Activated T-helper 1 cell treated with anti-CD3 and anti-CD28 coated beads, Interleukin-12 subunit alpha, Interleukin-12 subunit beta, Interleukin-2, Interleukin-4 antibody, amounts not matched to agents 30 ng/mL and 10 ng/mL and 1 ng/mL, durations not matched to agents 14 hours and 24 hours and 36 hours (primary cell): ENCODE measurements at regions of chr9 and their contacts with region 1.

Region 1: DNA sequence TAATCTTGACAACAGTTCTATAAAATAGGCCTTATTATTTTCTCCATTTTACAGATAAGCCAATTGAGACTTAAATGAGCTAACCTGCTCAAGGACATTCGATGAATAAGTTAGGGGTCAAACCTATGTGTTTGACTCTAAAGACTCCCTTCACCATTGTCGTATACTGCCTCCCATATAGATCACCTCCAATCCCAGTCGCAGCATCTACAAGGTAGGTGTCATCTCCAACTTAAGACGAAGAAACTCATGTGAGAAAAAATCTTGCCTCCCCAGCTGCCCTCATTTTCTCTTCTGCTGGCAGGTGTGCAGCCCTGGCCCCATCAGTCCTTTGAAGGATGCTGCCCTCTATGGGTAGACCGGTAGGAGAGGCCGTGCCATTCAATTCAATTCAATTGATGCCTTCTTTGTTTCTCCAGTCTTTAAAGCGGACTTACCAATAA is 75.2 kb upstream of the SMARCA2 start:
- DNase-seq: peak; percentile 5
- H3K4me3 Mint-ChIP-seq: no peak overlapping the region
- H3K27ac Mint-ChIP-seq: no peak overlapping the region
- H3K4me1 Mint-ChIP-seq: no peaks in the 10 kb centered on the region
- H3K27me3 Mint-ChIP-seq: peaks cover 5% of the 10 kb centered on the region

Region 2: GRCh38 chr9:1591310-1591709 is 348.6 kb before region 1 on chr9:
- intact Hi-C with region 1: no loop called
- DNase-seq: no peak
- H3K4me3 Mint-ChIP-seq: no peak overlapping the region
- H3K27ac Mint-ChIP-seq: no peak overlapping the region
- H3K4me1 Mint-ChIP-seq: no peaks in the 10 kb centered on the region
- H3K27me3 Mint-ChIP-seq: peaks cover 2% of the 10 kb centered on the region

Region 3: GRCh38 chr9:1709345-1709744 is 230.6 kb before region 1 on chr9:
- intact Hi-C with region 1: loop called (anchors 5 kb)
- DNase-seq: no peak
- H3K4me3 Mint-ChIP-seq: no peak overlapping the region
- H3K27ac Mint-ChIP-seq: no peak overlapping the region
- H3K4me1 Mint-ChIP-seq: no peaks in the 10 kb centered on the region
- H3K27me3 Mint-ChIP-seq: peaks cover 5% of the 10 kb centered on the region

Region 4: DNA sequence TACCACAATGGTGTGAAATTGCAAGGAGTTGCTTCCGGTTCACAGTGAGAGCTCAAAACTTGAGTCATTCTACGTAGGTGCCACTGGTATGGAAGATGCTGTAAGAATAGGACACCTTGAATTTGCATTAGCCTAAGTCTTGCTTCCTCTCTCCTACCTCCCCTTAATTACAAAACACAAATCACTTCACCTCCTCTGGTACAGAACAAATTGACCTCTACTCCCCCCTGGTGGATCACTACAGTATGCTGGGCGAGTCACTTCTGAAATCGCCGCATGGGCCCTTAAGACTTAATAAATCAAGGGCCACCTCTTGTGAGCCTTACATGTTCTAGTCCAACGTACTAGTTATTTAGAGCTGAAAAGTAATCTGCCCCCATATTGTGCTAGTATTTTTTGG is 70.1 kb before region 1 on chr9:
- intact Hi-C with region 1: loop called (anchors 2 kb)
- DNase-seq: no peak
- H3K4me3 Mint-ChIP-seq: no peak overlapping the region
- H3K27ac Mint-ChIP-seq: no peak overlapping the region
- H3K4me1 Mint-ChIP-seq: no peaks in the 10 kb centered on the region
- H3K27me3 Mint-ChIP-seq: peaks cover 48% of the 10 kb centered on the region

Region 5: GRCh38 chr9:2043881-2044462 is 104.0 kb after region 1 on chr9:
- intact Hi-C with region 1: no loop called
- DNase-seq: no peak
- H3K4me3 Mint-ChIP-seq: no peak overlapping the region
- H3K27ac Mint-ChIP-seq: peak overlapping the region; percentile 15
- H3K4me1 Mint-ChIP-seq: peaks cover 39% of the 10 kb centered on the region
- H3K27me3 Mint-ChIP-seq: no peaks in the 10 kb centered on the region

Region 6: DNA sequence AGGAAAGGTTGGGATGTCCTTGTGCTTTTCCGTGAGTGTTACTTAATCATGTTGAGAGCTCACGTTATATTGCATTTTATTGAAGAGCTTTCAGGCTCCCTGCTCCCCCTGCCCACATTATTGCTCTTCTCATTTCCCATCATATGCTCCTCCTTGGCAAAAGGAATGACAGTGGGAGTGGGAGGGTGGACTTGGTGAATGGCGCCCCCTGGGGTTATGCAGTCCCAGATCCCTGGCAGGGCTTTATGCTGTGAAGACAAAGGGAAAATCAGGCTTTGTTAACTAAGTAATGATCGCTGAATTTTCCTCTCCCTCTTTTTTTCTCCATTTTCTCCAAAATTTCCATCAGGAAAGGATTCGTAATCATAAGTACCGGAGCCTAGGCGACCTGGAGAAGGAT is 241.8 kb after region 1 on chr9:
- intact Hi-C with region 1: no loop called
- DNase-seq: no peak
- H3K4me3 Mint-ChIP-seq: no peak overlapping the region
- H3K27ac Mint-ChIP-seq: no peak overlapping the region
- H3K4me1 Mint-ChIP-seq: no peaks in the 10 kb centered on the region
- H3K27me3 Mint-ChIP-seq: no peaks in the 10 kb centered on the region

Region 7: GRCh38 chr9:2241836-2242741 is 302.1 kb after region 1 on chr9:
- intact Hi-C with region 1: no loop called
- DNase-seq: peak; percentile 56
- H3K4me3 Mint-ChIP-seq: peak overlapping the region; percentile 77
- H3K27ac Mint-ChIP-seq: peak overlapping the region; percentile 40
- H3K4me1 Mint-ChIP-seq: peaks cover 17% of the 10 kb centered on the region
- H3K27me3 Mint-ChIP-seq: peaks cover 37% of the 10 kb centered on the region